IMR-90 (cell line): ENCODE measurements at regions of chr1 and their contacts with region 1.

Region 1: DNA sequence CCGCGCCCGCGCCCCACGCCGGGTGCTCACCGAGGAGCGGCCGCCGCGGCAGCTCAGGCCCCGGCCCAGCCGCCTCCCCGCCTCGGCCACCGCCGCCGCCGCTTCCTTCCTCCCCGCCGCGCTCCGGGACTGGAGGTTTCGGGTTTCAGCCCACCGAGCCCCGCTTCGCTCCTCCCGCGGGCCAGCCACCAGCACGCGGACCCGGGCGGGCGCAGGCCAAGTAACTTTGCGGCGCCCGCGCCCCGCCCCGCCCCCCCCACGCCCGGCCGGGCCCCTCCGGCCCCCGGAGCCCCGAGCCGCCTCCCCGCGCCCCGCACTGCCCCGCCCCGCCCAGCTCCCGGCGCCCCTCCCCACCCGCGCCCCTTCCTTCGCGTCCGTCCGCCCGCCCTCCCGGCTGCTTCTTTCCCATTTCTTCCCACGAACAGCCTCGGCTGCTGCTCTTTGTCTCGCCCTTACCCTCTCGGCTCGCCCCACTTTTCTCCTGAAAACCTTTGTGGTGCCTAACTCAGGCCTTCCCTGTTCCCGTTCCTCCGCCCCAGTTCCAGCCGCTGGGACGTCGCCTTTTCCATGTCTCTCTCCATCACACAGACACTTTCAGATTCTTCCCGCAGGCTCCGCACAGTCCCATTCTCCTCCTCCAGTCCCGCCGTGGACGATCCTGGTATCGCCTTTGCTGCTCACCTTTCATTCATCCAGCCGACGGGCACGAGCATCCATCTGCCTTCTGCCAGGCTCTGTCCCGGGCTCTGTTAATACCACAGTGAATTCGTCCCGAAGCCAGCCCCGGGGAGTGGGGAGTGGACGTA is at the start of gene GPR161:
- DNase-seq: peak; percentile 36
- ATAC-seq: peak; percentile 72
- H3K4me3 ChIP-seq: peak within 1 kb of the TSS; percentile 70
- H3K27ac ChIP-seq: peak within 1 kb of the TSS; percentile 76
- H3K4me1 ChIP-seq: peaks cover 3% of the 10 kb centered on the region; the same call in 1 of the 2 replicates
- H3K27me3 ChIP-seq: 0 out of 2 replicates have a peak, but pooled peaks cover 2% of the 10 kb centered on the region
- CTCF ChIP-seq: no peak
- POLR2A ChIP-seq: no peak
- RAD21 ChIP-seq: no peak
- total RNA-seq, gene GPR161: 11.1 and 13.3 TPM in 2 replicates

Region 2: GRCh38 chr1:167645625-167646414 is 491.1 kb before region 1 on chr1:
- CTCF ChIA-PET with region 1: no interaction called
- POLR2A ChIA-PET with region 1: interaction called, 10 read pairs
- dilution Hi-C with region 1: no loop called
- in situ Hi-C with region 1: no loop called
- intact Hi-C with region 1: no loop called
- DNase-seq: no peak
- ATAC-seq: no peak
- H3K4me3 ChIP-seq: no peak overlapping the region
- H3K27ac ChIP-seq: no peak overlapping the region
- H3K4me1 ChIP-seq: no peaks in the 10 kb centered on the region
- H3K27me3 ChIP-seq: peaks cover 20% of the 10 kb centered on the region
- CTCF ChIP-seq: no peak
- POLR2A ChIP-seq: no peak
- RAD21 ChIP-seq: no peak

Region 3: GRCh38 chr1:168019407-168019806 is 117.5 kb before region 1 on chr1:
- CTCF ChIA-PET with region 1: no interaction called
- POLR2A ChIA-PET with region 1: no interaction called
- dilution Hi-C with region 1: no loop called
- in situ Hi-C with region 1: no loop called
- intact Hi-C with region 1: no loop called
- DNase-seq: no peak
- ATAC-seq: no peak
- H3K4me3 ChIP-seq: no peak overlapping the region
- H3K27ac ChIP-seq: no peak overlapping the region
- H3K4me1 ChIP-seq: no peaks in the 10 kb centered on the region
- H3K27me3 ChIP-seq: no peaks in the 10 kb centered on the region
- CTCF ChIP-seq: no peak
- POLR2A ChIP-seq: no peak
- RAD21 ChIP-seq: no peak

Region 4: GRCh38 chr1:168065506-168065905 is 71.4 kb before region 1 on chr1:
- CTCF ChIA-PET with region 1: no interaction called
- POLR2A ChIA-PET with region 1: no interaction called
- dilution Hi-C with region 1: no loop called
- in situ Hi-C with region 1: no loop called
- intact Hi-C with region 1: no loop called
- DNase-seq: no peak
- ATAC-seq: no peak
- H3K4me3 ChIP-seq: no peak overlapping the region
- H3K27ac ChIP-seq: no peak overlapping the region
- H3K4me1 ChIP-seq: no peaks in the 10 kb centered on the region
- H3K27me3 ChIP-seq: no peaks in the 10 kb centered on the region
- CTCF ChIP-seq: no peak
- POLR2A ChIP-seq: no peak
- RAD21 ChIP-seq: no peak

Region 5: DNA sequence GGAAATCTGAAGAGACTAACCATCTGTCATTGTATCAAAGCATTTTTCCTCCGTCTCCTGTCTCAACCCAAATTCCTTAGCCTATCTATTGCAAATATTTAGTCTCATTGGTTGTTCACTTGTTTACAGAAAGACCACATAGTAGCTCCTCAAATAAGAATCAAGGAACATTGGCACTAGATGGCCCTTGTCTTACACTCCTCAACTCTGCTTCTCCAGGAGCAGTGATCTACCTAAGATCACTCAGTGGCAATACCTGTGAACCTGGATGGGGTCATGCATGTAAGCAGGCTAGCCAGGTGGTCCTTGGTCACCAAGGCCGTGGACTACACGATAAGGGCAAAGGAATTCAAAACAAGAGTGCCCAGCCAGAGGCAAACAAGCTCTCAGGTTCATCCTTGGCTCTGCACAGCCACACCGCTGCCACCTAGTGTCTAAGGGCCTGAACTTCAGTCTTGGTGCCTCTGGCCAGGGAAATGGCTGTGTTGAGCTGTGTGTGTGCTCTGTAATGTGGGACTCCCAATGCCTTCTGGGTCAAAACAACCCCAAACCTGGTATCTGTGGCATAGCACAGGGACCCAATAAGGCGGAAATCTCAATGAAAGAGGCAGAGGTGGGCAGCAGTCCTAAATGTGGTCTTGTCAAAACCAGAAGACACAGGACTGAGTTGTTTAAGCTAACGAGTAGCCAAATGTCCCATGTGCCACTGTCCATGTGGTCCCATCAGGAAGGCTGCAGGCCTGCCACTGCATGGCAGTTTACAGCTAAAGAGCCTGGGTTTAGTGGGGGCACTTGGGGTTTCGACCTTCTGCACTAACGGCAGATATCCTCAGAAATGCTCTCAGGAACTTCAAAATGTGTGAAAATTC is 54.7 kb before region 1 on chr1:
- CTCF ChIA-PET with region 1: no interaction called
- POLR2A ChIA-PET with region 1: no interaction called
- dilution Hi-C with region 1: no loop called
- in situ Hi-C with region 1: no loop called
- intact Hi-C with region 1: loop called (anchors 5 kb)
- DNase-seq: peak; percentile 79
- ATAC-seq: peak; percentile 89
- H3K4me3 ChIP-seq: no peak overlapping the region
- H3K27ac ChIP-seq: no peak overlapping the region
- H3K4me1 ChIP-seq: peaks cover 9% of the 10 kb centered on the region; the same call in 1 of the 2 replicates
- H3K27me3 ChIP-seq: no peaks in the 10 kb centered on the region
- CTCF ChIP-seq: peak; percentile 83
- POLR2A ChIP-seq: no peak
- RAD21 ChIP-seq: peak; percentile 78

Region 6: GRCh38 chr1:168178638-168179437 is 41.9 kb after region 1 on chr1 and contains the start of gene TIPRL:
- CTCF ChIA-PET with region 1: no interaction called
- POLR2A ChIA-PET with region 1: no interaction called
- dilution Hi-C with region 1: no loop called
- in situ Hi-C with region 1: no loop called
- intact Hi-C with region 1: loop called (anchors 2 kb)
- DNase-seq: peak; percentile 100
- ATAC-seq: peak; percentile 97
- H3K4me3 ChIP-seq: peak within 1 kb of the TSS; percentile 74
- H3K27ac ChIP-seq: peak within 1 kb of the TSS; percentile 89
- H3K4me1 ChIP-seq: no peaks in the 10 kb centered on the region
- H3K27me3 ChIP-seq: no peaks in the 10 kb centered on the region
- CTCF ChIP-seq: peak; percentile 65
- POLR2A ChIP-seq: peak; percentile 68
- RAD21 ChIP-seq: peak; percentile 31; the same call in 1 of the 2 replicates
- total RNA-seq, gene TIPRL: 15.4 and 41.1 TPM in 2 replicates

Region 7: GRCh38 chr1:168234846-168235547 is 98.1 kb after region 1 on chr1:
- CTCF ChIA-PET with region 1: no interaction called
- POLR2A ChIA-PET with region 1: no interaction called
- dilution Hi-C with region 1: no loop called
- in situ Hi-C with region 1: no loop called
- intact Hi-C with region 1: no loop called
- DNase-seq: peak; percentile 43
- ATAC-seq: peak; percentile 80
- H3K4me3 ChIP-seq: no peak overlapping the region
- H3K27ac ChIP-seq: no peak overlapping the region
- H3K4me1 ChIP-seq: no peaks in the 10 kb centered on the region
- H3K27me3 ChIP-seq: no peaks in the 10 kb centered on the region
- CTCF ChIP-seq: peak; percentile 51
- POLR2A ChIP-seq: no peak
- RAD21 ChIP-seq: peak; percentile 50